PC-9 (cell line): ENCODE measurements at regions of chr11 and their contacts with region 1.

Region 1: DNA sequence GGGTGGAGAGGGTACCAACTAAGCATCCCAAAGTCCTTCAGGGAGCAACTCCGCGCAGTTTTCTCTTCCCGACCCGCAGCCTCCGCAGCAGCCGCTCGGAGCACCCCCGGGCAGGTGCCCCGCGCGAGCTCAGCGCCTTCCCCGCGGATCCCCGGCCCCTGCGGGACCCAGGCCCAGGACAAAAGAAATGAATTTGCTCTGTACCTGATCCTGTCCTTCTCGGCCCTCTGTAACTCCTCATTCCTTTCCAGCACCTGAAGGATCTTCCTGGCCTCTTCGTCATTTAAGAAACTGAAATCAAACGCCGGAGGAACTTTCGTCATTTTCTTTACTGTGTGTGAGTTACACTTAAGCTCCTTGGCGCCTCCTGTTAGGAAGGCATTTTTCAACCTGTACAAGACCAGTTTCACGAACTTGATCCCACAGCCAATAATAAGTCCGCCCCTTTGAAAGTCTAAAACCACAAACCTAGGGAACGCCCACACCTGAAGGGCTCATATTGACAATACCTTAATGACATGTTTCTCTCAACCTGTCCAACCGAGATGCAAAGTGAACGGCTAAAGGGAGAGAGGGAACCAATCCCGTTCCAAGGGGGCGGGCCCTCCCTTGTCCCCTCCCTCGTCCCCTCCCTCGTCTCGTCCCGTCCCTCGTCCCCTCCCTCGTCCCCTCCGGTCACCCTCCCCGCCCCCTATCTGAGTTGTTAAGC is at the start of gene EXPH5:
- DNase-seq: peak; percentile 97 to 100
- H3K4me3 ChIP-seq: peak within 1 kb of the TSS; percentile 74
- H3K27ac ChIP-seq: peak within 1 kb of the TSS; percentile 97
- H3K4me1 ChIP-seq: peaks cover 29% of the 10 kb centered on the region
- H3K27me3 ChIP-seq: no peaks in the 10 kb centered on the region
- CTCF ChIP-seq: peak; percentile 33; the same call in 1 of the 2 replicates
- total RNA-seq, gene EXPH5: 23.3 and 36.3 TPM in 2 replicates

Region 2: DNA sequence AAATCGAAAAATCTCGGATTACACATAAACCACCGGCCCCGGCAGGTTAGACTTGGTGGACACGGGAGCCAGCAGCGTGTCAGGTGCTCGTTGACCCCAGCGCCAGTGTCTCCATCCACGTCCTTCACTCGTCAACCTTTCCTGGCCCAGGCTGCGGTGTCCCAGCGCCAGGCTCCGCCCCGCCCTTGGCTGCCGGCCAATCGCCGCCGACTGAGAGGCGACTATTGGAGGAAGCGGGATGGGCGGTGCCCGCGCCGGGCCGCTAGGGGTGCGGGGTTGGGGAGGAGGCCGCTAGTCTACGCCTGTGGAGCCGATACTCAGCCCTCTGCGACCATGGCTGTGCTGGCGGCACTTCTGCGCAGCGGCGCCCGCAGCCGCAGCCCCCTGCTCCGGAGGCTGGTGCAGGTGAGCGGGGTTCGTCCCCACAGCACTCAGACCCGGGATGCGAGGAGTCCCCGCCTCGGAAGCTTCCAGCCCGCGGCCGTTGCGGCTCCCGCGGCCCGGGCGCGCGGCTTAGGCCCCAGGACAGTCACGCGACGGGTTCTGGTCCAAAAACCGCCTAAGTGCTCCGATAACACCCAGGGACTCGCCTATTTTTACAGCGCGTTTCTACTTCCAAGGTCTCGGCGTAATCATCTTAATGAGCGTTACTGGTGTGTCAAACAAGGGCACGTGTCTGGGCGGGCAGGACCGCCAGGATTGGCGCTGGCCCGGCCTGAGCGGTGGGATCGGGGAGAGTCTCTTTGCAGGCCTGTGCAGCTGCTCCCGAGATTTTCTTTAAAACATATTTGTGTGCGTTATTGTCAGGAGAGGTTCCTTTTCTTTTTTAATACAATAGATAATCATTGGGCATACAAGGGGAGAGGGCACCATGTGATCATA is 471.9 kb before region 1 on chr11 and contains the start of gene ACAT1:
- CTCF ChIA-PET with region 1: no interaction called
- POLR2A ChIA-PET with region 1: no interaction called
- intact Hi-C with region 1: loop called (anchors 5 kb)
- DNase-seq: peak; percentile 88 to 94
- H3K4me3 ChIP-seq: peak within 1 kb of the TSS; percentile 92
- H3K27ac ChIP-seq: no peak within 1 kb of the TSS
- H3K4me1 ChIP-seq: peaks cover 12% of the 10 kb centered on the region
- H3K27me3 ChIP-seq: no peaks in the 10 kb centered on the region
- CTCF ChIP-seq: peak; percentile 62
- total RNA-seq, gene ACAT1: 31.8 and 34.4 TPM in 2 replicates

Region 3: GRCh38 chr11:108467091-108467823 is 126.1 kb before region 1 on chr11 and contains the start of gene C11orf65:
- CTCF ChIA-PET with region 1: no interaction called
- POLR2A ChIA-PET with region 1: no interaction called
- intact Hi-C with region 1: loop called (anchors 2 kb)
- DNase-seq: peak; percentile 93 to 94
- H3K4me3 ChIP-seq: peak within 1 kb of the TSS; percentile 80
- H3K27ac ChIP-seq: peak within 1 kb of the TSS; percentile 92
- H3K4me1 ChIP-seq: peaks cover 16% of the 10 kb centered on the region
- H3K27me3 ChIP-seq: no peaks in the 10 kb centered on the region
- CTCF ChIP-seq: no peak
- total RNA-seq, gene C11orf65: 1.7 and 1.9 TPM in 2 replicates

Region 4: DNA sequence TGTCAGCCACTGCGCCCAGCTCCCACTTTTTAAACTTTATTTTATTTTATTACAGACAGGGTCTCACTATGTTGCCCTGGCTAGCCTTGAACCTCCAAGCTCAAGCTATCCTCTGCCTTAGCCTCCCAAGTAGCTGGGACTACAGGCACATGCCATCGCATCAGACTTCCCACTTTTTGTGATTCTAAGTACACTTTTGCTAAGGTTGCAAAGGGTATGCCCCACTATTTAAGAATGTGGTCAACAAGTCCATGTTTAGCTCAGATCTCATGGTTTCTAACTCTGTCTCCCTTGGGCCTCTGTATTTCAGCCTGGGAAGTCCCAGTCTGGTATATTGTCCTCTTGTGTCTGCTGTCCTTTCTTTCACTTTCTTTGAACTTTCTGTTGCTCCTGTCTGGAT is 35.1 kb before region 1 on chr11:
- CTCF ChIA-PET with region 1: no interaction called
- POLR2A ChIA-PET with region 1: interaction called, 20 read pairs
- intact Hi-C with region 1: no loop called
- DNase-seq: no peak
- H3K4me3 ChIP-seq: no peak overlapping the region
- H3K27ac ChIP-seq: no peak overlapping the region
- H3K4me1 ChIP-seq: no peaks in the 10 kb centered on the region
- H3K27me3 ChIP-seq: no peaks in the 10 kb centered on the region
- CTCF ChIP-seq: no peak

Region 5: DNA sequence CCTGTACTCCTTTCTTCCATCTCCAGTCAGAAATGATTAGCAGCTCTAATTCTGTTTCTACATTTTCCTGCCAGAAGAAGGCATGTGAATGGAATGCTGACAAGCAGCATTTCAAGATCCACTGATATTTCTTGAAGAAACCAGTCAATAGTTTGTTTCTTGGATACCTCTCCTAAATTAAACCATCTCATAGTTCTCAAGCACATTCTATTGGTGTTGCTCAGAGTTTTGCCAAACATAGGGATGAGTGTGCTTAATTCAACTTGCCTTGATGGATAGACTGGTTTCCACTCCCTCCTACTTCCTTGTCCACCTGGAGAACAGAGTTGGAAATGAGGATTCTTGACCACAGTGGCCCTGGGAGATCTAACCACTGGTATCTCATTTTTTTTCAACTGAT is 41.7 kb after region 1 on chr11:
- CTCF ChIA-PET with region 1: interaction called, 4 read pairs
- POLR2A ChIA-PET with region 1: interaction called, 5 read pairs
- intact Hi-C with region 1: loop called (anchors 1 kb)
- DNase-seq: peak; percentile 62 to 100
- H3K4me3 ChIP-seq: 0 out of 2 replicates have a peak overlapping the region, but pooled peaks have one; percentile 20
- H3K27ac ChIP-seq: peak overlapping the region; percentile 95
- H3K4me1 ChIP-seq: peaks cover 27% of the 10 kb centered on the region
- H3K27me3 ChIP-seq: no peaks in the 10 kb centered on the region
- CTCF ChIP-seq: no peak

Region 6: DNA sequence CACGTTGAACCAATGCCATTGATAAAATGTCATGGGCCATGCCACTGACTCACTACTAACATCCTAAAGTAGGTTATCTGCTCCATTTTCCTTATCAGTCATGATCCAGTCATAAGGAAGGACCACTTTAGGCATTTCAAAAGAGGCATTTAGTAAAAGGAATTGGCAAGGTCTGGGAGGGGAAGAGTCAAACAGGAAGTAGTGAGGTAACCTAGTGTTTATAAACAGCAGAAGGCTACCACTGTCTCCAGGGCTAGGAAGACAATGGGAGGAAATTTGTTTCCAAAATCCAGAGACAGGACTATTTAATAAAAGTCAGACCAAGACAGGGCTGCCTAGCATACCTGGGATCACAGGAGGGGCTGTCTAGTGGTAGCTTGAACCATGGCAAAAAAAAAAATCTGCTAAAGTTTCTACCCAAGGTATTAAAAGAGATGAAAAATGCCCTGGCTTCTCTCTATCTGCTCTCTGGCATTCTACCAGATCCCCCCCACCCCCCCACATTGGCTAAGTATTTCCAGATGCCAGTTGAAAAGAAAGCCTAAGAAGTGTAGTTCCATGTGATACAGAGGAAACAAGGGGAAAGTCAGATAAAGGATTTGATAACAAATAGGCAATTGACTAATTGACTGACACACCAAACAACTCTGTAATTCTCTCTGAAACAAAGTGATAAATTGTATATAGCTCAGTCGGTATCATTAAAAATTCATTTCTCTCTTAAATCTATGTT is 778.2 kb after region 1 on chr11:
- CTCF ChIA-PET with region 1: no interaction called
- POLR2A ChIA-PET with region 1: interaction called, 19 read pairs
- intact Hi-C with region 1: no loop called
- DNase-seq: no peak
- H3K4me3 ChIP-seq: no peak overlapping the region
- H3K27ac ChIP-seq: no peak overlapping the region
- H3K4me1 ChIP-seq: no peaks in the 10 kb centered on the region
- H3K27me3 ChIP-seq: no peaks in the 10 kb centered on the region
- CTCF ChIP-seq: no peak